Endothelial cell of umbilical vein (primary cell): ENCODE measurements at regions of chr16 and their contacts with region 1.

Region 1: DNA sequence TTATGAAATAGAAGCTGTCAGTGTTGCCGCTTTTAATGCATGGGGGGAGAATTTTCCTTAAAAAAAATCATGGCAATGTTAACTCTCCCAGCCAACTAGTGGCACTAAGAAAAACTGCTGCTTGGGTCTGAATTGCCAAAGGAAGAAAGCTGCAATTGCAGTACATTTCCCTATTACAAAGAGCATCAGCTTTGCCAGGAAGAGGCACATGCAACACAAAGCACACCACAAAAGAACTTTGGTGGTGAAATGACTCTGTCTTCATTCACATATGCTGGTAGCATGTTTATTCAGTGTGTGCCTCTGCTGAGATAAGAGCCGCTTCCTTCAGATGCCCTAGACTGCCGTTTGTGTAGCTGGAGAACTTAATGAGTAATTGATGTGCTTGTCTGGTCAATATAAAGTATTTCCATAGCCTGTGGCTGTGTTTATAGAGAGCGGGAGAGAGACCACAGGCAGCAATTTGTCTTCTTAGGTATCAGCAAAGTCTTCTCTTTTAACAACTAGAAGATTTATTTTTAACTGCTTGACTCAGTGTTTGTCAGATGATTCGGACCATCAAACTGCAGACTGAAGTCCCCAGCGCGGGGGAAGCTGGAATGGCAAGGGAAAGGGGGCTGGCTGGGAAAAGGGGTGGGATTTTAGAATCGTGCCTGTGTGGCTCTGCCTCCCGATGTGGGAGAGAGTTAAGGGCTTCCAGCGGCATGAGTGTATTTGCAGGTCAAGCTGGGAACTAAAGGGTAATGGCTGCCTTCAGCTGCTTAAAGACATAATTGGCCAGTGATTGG is 115.1 kb downstream of the MRTFB start:
- DNase-seq: peak; percentile 78
- H3K4me3 ChIP-seq: no peak overlapping the region
- H3K27ac ChIP-seq: no peak overlapping the region
- H3K4me1 ChIP-seq: peaks cover 19% of the 10 kb centered on the region
- H3K27me3 ChIP-seq: no peaks in the 10 kb centered on the region
- CTCF ChIP-seq: peak; percentile 28 to 48
- POLR2A ChIP-seq: no peak

Region 2: GRCh38 chr16:14109782-14110727 is 76.1 kb before region 1 on chr16:
- CTCF ChIA-PET with region 1: interaction called, 12 read pairs
- POLR2A ChIA-PET with region 1: no interaction called
- dilution Hi-C with region 1: no loop called
- intact Hi-C with region 1: no loop called
- DNase-seq: peak; percentile 40
- H3K4me3 ChIP-seq: no peak overlapping the region
- H3K27ac ChIP-seq: no peak overlapping the region
- H3K4me1 ChIP-seq: peaks cover 27% of the 10 kb centered on the region
- H3K27me3 ChIP-seq: no peaks in the 10 kb centered on the region
- CTCF ChIP-seq: no peak
- POLR2A ChIP-seq: no peak

Region 3: DNA sequence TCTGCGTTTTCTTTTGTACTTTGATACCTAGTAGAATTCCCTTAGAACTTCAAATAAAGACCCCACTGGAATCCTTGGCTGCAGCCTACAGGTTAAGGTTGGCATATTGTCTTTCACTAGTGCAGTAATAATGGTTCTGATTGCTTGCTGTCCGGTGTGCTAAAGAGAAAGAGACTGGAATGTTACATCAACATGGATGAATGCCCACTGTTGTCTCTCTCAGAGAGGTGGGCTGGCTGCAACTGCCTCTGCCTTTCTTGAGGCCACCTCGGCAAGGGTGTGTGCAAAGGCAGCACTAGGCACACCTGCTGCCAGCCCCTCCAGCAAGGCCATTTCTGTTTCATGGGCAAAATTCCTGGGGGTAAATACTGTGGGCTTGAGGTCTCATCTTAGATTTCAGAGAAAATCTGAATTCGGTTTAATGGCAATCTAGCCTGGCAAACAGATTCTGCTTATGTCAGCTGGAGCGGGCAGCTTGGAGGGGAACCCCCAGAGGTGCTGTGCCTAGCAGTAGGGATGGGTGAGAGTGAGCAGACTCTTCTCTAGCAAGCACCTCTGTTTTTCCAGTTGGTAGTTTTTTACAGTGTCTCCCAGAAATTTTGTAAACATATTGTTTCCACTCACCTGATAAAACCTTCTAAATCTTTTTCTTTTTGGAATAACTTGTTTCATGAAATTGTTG is 61.1 kb before region 1 on chr16:
- CTCF ChIA-PET with region 1: interaction called, 12 read pairs
- POLR2A ChIA-PET with region 1: no interaction called
- dilution Hi-C with region 1: no loop called
- intact Hi-C with region 1: no loop called
- DNase-seq: no peak
- H3K4me3 ChIP-seq: no peak overlapping the region
- H3K27ac ChIP-seq: no peak overlapping the region
- H3K4me1 ChIP-seq: peaks cover 10% of the 10 kb centered on the region
- H3K27me3 ChIP-seq: no peaks in the 10 kb centered on the region
- CTCF ChIP-seq: no peak
- POLR2A ChIP-seq: no peak

Region 4: GRCh38 chr16:14168146-14168545 is 18.1 kb before region 1 on chr16:
- CTCF ChIA-PET with region 1: interaction called, 10 read pairs
- POLR2A ChIA-PET with region 1: no interaction called
- dilution Hi-C with region 1: no loop called
- intact Hi-C with region 1: no loop called
- DNase-seq: no peak
- H3K4me3 ChIP-seq: no peak overlapping the region
- H3K27ac ChIP-seq: no peak overlapping the region
- H3K4me1 ChIP-seq: no peaks in the 10 kb centered on the region
- H3K27me3 ChIP-seq: no peaks in the 10 kb centered on the region
- CTCF ChIP-seq: no peak
- POLR2A ChIP-seq: no peak

Region 5: GRCh38 chr16:14196539-14196938 is 10.3 kb after region 1 on chr16:
- CTCF ChIA-PET with region 1: interaction called, 30 read pairs
- POLR2A ChIA-PET with region 1: no interaction called
- dilution Hi-C with region 1: no loop called
- intact Hi-C with region 1: no loop called
- DNase-seq: peak; percentile 73
- H3K4me3 ChIP-seq: no peak overlapping the region
- H3K27ac ChIP-seq: peak overlapping the region; percentile 48
- H3K4me1 ChIP-seq: peaks cover 18% of the 10 kb centered on the region
- H3K27me3 ChIP-seq: no peaks in the 10 kb centered on the region
- CTCF ChIP-seq: no peak
- POLR2A ChIP-seq: no peak

Region 6: DNA sequence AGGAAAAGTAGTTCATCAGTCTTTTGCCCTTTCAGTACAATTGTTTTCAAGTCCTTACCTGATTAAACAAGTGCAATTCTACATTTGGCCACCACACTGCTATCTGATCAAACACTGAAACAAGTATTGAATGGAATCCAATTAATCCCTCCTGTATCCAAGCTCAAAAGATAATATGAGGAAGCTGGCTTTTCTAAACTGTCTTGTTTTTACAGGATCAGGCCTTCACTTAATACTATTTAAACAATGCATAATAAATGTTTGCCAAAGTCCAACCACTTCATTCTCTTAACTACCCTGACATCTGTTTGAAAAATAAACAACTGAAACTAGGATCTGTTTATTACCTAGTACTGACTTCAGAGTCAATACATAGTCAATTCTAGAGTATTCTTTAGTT is 16.5 kb after region 1 on chr16:
- CTCF ChIA-PET with region 1: interaction called, 30 read pairs
- POLR2A ChIA-PET with region 1: no interaction called
- dilution Hi-C with region 1: no loop called
- intact Hi-C with region 1: no loop called
- DNase-seq: peak; percentile 85
- H3K4me3 ChIP-seq: no peak overlapping the region
- H3K27ac ChIP-seq: no peak overlapping the region
- H3K4me1 ChIP-seq: no peaks in the 10 kb centered on the region
- H3K27me3 ChIP-seq: no peaks in the 10 kb centered on the region
- CTCF ChIP-seq: peak in 1 of 2 donors; percentile 33
- POLR2A ChIP-seq: no peak